Activated CD4-positive, alpha-beta memory T cell treated with anti-CD3 and anti-CD28 coated beads for 36 hours (primary cell): ENCODE measurements at regions of chr1 and their contacts with region 1.

Region 1: GRCh38 chr1:246566128-246566812 is at the starts of genes CNST and TFB2M:
- DNase-seq: peak; percentile 98
- H3K4me3 Mint-ChIP-seq: peak within 1 kb of the TSS; percentile 90
- H3K27ac Mint-ChIP-seq: peak within 1 kb of the TSS; percentile 91
- H3K4me1 Mint-ChIP-seq: peaks cover 42% of the 10 kb centered on the region
- H3K27me3 Mint-ChIP-seq: no peaks in the 10 kb centered on the region
- total RNA-seq, gene CNST: 25.9 TPM
- total RNA-seq, gene TFB2M: 13.6 to 14.5 TPM

Region 2: DNA sequence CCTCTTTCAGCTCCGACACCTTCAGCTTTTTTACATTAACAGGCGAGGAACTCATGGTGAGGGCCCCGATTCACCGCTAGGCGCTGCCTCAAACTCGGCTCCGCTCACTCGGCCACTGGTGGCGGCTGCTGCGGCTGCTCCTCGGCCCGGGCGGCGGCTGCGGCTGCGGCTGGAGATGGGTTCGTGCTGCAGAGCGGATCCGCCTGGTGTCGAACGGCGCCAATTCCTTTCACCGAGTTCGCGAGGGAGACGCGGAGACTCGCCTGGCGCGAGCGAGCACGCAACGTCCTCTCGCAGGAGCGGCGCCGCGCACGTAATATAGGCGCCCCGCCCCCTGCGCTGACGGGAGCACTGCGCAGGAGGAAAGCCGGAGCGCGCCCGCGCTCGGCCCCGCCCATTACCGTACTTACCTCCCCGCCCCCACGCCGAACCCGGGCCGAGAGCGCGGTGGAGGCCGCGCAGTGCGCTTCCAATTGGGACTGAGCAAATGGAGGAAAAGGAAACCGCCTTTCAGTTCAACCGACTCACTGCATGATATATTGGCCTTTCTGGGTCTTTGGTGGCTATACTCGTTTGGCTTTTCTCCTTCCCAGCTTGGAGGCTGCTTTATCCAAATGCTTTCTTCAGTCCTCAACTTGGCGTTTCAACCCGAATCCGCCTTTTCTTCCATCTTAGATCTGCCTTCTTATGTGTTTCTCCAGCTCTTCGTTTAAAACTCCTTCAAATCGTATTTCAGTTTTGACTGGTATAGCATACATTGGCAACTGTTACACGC is 1701.8 kb before region 1 on chr1 and contains the start of gene HNRNPU:
- CTCF ChIA-PET with region 1: no interaction called
- POLR2A ChIA-PET with region 1: no interaction called
- intact Hi-C with region 1: loop called (anchors 5 kb)
- DNase-seq: peak; percentile 97
- H3K4me3 Mint-ChIP-seq: peak within 1 kb of the TSS; percentile 99
- H3K27ac Mint-ChIP-seq: peak within 1 kb of the TSS; percentile 97
- H3K4me1 Mint-ChIP-seq: peaks cover 38% of the 10 kb centered on the region
- H3K27me3 Mint-ChIP-seq: no peaks in the 10 kb centered on the region
- total RNA-seq, gene HNRNPU: 410 to 421 TPM

Region 3: DNA sequence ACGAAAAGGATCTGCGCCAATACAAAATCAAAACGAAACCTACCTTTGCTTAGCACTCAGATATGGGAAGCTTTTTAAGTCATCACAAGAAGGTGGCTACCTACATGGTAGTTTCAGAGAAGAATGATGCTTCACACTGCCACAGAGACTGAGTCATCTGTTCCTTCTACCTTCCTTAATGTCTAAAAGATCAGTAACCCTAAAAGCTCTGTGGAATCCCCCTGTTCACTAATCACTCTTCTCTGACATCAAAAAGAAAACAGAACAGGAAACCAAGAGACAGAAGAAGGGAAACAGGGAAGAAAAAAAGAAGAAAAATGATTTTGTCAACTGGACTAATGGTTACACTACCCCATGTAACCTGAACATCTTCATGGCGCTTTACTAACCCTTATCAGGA is 236.4 kb before region 1 on chr1:
- CTCF ChIA-PET with region 1: no interaction called
- POLR2A ChIA-PET with region 1: no interaction called
- intact Hi-C with region 1: loop called (anchors 5 kb)
- DNase-seq: peak; percentile 42
- H3K4me3 Mint-ChIP-seq: no peak overlapping the region
- H3K27ac Mint-ChIP-seq: peak overlapping the region; percentile 72
- H3K4me1 Mint-ChIP-seq: peaks cover 49% of the 10 kb centered on the region
- H3K27me3 Mint-ChIP-seq: no peaks in the 10 kb centered on the region

Region 4: DNA sequence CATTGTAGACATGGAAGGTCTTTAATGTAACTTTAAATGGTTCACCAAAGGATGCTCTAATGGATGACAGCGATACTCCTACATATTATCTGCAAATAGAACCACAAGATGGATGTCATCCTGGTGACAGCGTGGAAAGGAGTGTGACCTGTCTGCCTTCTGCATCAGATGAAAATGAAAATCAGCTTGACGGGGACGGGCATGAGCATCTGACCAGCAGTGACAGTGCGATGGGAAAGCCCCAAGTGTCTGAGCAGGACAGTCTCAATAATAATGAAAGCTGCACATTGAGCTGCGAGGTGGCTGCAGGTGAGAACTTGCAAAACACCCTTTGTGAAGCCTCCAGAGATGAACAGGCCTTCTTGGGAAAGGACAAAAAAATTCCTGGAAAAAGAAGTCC is 25.2 kb after region 1 on chr1:
- CTCF ChIA-PET with region 1: interaction called, 3 read pairs
- POLR2A ChIA-PET with region 1: interaction called, 3 read pairs
- intact Hi-C with region 1: loop called (anchors 1 kb)
- DNase-seq: peak; percentile 65
- H3K4me3 Mint-ChIP-seq: no peak overlapping the region
- H3K27ac Mint-ChIP-seq: peak overlapping the region; percentile 71
- H3K4me1 Mint-ChIP-seq: peaks cover 50% of the 10 kb centered on the region
- H3K27me3 Mint-ChIP-seq: no peaks in the 10 kb centered on the region

Region 5: GRCh38 chr1:246931549-246932365 is 365.5 kb after region 1 on chr1 and contains the start of gene AHCTF1:
- CTCF ChIA-PET with region 1: no interaction called
- POLR2A ChIA-PET with region 1: no interaction called
- intact Hi-C with region 1: loop called (anchors 2 kb)
- DNase-seq: peak; percentile 96
- H3K4me3 Mint-ChIP-seq: peak within 1 kb of the TSS; percentile 96
- H3K27ac Mint-ChIP-seq: peak within 1 kb of the TSS; percentile 96
- H3K4me1 Mint-ChIP-seq: peaks cover 30% of the 10 kb centered on the region
- H3K27me3 Mint-ChIP-seq: no peaks in the 10 kb centered on the region
- total RNA-seq, gene AHCTF1: 35.8 to 40.3 TPM

Region 6: GRCh38 chr1:247210376-247211117 is 644.3 kb after region 1 on chr1:
- CTCF ChIA-PET with region 1: no interaction called
- POLR2A ChIA-PET with region 1: no interaction called
- intact Hi-C with region 1: loop called (anchors 2 kb)
- DNase-seq: peak; percentile 98
- H3K4me3 Mint-ChIP-seq: peak overlapping the region; percentile 90
- H3K27ac Mint-ChIP-seq: peak overlapping the region; percentile 96
- H3K4me1 Mint-ChIP-seq: peaks cover 62% of the 10 kb centered on the region
- H3K27me3 Mint-ChIP-seq: no peaks in the 10 kb centered on the region